Aorta (tissue), 5 donors: ENCODE measurements at regions of chr16 and their contacts with region 1.

Region 1: GRCh38 chr16:10181196-10182162 is 749 bp downstream of the GRIN2A start:
- DNase-seq: peak; percentile 80 to 93
- ATAC-seq: peak; percentile 93
- H3K4me3 ChIP-seq: peak overlapping the region; percentile 4 to 8
- H3K27ac ChIP-seq: no peak overlapping the region
- H3K4me1 ChIP-seq: no peaks in the 10 kb centered on the region
- H3K27me3 ChIP-seq: no peaks in the 10 kb centered on the region

Region 2: GRCh38 chr16:9159839-9160550 is 1021.5 kb before region 1 on chr16:
- intact Hi-C with region 1: loop called in 1 of 2 experiments (anchors 10 kb)
- DNase-seq: peak in 1 of 2 donors; percentile 59
- ATAC-seq: no peak
- H3K4me3 ChIP-seq: no peak overlapping the region
- H3K27ac ChIP-seq: no peak overlapping the region
- H3K4me1 ChIP-seq: no peaks in the 10 kb centered on the region
- H3K27me3 ChIP-seq: no peaks in the 10 kb centered on the region

Region 3: GRCh38 chr16:9297437-9298113 is 883.9 kb before region 1 on chr16:
- intact Hi-C with region 1: loop called (anchors 5 to 10 kb)
- DNase-seq: peak; percentile 47 to 75
- ATAC-seq: no peak
- H3K4me3 ChIP-seq: no peak overlapping the region
- H3K27ac ChIP-seq: no peak overlapping the region
- H3K4me1 ChIP-seq: no peaks in the 10 kb centered on the region
- H3K27me3 ChIP-seq: no peaks in the 10 kb centered on the region

Region 4: DNA sequence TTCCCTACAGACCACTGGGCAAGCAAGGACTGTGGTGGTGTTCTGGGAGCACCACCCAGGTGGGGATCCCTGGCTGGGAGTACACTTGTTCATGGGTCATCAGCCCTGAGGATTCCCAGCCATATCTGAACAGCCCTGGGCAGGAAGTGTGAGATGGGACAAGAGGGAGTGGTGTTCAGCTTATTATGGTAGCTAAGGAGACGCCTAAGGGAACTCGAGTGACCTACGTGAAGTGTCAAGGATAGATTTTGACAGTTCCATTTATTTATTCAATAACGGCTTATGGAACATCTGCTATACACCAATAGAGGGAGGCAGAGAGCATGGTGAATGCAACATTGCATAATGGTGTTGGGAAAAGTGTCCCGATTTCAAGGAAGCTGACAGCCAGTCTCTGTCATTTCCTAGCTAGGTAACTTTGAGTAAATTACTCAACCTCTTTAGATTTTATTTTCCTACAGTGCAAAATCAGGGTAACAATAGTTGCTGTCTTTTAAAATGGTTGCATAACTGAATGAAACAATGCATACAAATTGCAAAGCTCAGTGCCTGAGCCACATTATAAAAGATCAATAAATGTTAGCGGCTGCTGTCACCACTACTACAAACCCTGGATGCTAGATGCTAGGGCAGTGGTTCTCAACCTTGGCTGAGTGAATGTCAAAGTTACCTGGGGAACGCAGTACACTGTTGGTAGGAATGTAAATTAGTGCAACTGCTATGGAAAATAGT is 533.3 kb before region 1 on chr16:
- intact Hi-C with region 1: loop called (anchors 2 to 5 kb)
- DNase-seq: no peak
- ATAC-seq: no peak
- H3K4me3 ChIP-seq: no peak overlapping the region
- H3K27ac ChIP-seq: no peak overlapping the region
- H3K4me1 ChIP-seq: no peaks in the 10 kb centered on the region
- H3K27me3 ChIP-seq: no peaks in the 10 kb centered on the region

Region 5: DNA sequence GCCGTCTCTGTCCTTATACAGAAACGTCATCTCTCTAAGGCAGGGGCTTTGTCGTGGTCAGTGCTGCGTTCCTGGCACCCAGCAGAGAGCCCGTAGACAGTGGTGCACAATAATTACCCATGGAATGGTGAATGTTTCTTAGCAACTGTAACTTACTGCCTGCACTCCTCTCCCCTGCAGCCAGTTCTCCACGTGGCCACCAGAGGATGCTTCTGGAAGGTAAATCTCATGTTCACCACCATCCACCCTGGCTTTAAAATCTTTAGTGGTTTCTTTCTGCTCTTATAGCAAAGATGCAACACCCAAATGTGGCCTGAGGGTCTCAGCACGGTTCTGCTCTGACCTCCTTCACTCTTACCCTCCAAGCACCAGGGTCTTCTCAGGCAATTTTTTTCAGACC is 150.0 kb before region 1 on chr16:
- intact Hi-C with region 1: loop called (anchors 2 to 5 kb)
- DNase-seq: no peak
- ATAC-seq: peak; percentile 23
- H3K4me3 ChIP-seq: no peak overlapping the region
- H3K27ac ChIP-seq: no peak overlapping the region
- H3K4me1 ChIP-seq: no peaks in the 10 kb centered on the region
- H3K27me3 ChIP-seq: no peaks in the 10 kb centered on the region

Region 6: DNA sequence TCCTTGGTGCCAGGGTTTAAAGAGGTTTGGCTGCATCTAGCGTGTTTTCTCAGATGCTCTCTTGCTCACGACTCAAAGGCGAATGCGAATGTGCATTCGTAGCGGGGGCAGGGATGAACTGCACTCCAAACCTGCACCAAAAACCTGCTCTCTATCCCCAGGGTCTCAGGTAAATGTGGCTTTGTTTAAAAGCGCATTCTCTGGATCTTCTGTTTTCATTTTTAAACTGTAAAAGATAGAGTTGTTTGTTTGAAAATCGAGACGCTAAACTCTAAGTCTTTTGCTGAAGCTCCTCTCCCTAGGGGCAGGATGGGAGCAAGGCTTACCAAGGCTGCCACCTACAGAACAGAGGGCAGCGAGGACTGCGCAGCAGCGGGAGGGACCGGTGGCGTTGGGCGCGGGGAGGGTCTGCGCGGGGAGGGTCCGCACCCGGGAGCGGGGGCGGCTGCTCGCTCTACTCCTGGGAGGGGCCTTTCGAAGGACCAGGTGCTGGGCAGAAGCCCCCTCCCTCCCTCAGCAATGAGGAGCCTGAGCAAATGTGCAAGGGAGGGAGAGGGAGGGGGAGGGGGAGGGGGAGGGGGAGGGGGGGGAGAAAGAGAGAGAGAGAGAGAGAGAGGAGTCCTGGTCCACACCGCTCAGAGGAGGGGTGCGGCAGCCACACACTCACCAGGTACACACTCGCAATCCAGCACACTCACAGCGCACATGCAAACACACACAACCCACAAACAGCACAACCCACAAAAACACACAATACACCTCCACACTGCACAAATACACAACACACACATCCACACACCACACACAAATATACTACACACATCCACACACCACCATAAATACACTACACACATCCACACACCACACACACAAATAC is 142.0 kb before region 1 on chr16:
- intact Hi-C with region 1: loop called in 1 of 2 experiments (anchors 5 kb)
- DNase-seq: no peak
- ATAC-seq: peak; percentile 67
- H3K4me3 ChIP-seq: peak overlapping the region in 1 of 2 donors; percentile 29
- H3K27ac ChIP-seq: no peak overlapping the region
- H3K4me1 ChIP-seq: no peaks in the 10 kb centered on the region
- H3K27me3 ChIP-seq: no peaks in the 10 kb centered on the region

Region 7: GRCh38 chr16:10218490-10219206 is 37.2 kb after region 1 on chr16:
- intact Hi-C with region 1: no loop called
- DNase-seq: no peak
- ATAC-seq: no peak
- H3K4me3 ChIP-seq: no peak overlapping the region
- H3K27ac ChIP-seq: no peak overlapping the region
- H3K4me1 ChIP-seq: no peaks in the 10 kb centered on the region
- H3K27me3 ChIP-seq: no peaks in the 10 kb centered on the region

Region 8: DNA sequence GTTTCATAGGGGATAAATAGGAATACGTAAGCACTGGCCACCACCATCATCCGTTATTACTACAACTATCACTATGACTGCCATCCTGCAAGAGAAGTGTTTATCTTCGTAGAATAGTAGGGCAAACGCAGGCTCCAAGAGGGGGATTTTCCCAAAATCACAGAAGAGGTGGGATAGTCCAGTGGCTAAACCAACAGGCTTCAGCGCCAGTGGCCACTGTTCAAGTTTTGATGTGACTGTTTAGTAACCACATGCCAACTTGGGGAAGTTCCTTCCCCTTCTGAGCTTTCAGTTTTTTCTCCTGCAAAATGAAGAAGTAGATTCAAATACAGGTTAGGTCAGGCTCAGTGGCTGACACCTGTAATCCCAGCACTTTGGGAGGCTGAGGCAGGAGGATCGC is 61.4 kb after region 1 on chr16:
- intact Hi-C with region 1: no loop called
- DNase-seq: no peak
- ATAC-seq: no peak
- H3K4me3 ChIP-seq: no peak overlapping the region
- H3K27ac ChIP-seq: no peak overlapping the region
- H3K4me1 ChIP-seq: no peaks in the 10 kb centered on the region
- H3K27me3 ChIP-seq: no peaks in the 10 kb centered on the region

Region 9: GRCh38 chr16:10521681-10522274 is 340.3 kb after region 1 on chr16:
- intact Hi-C with region 1: no loop called
- DNase-seq: peak in 1 of 2 donors; percentile 74
- ATAC-seq: peak; percentile 85
- H3K4me3 ChIP-seq: no peak overlapping the region
- H3K27ac ChIP-seq: no peak overlapping the region
- H3K4me1 ChIP-seq: no peaks in the 10 kb centered on the region
- H3K27me3 ChIP-seq: no peaks in the 10 kb centered on the region